CD4-positive, alpha-beta memory T cell (primary cell): ENCODE measurements at regions of chr10 and their contacts with region 1.

Region 1: DNA sequence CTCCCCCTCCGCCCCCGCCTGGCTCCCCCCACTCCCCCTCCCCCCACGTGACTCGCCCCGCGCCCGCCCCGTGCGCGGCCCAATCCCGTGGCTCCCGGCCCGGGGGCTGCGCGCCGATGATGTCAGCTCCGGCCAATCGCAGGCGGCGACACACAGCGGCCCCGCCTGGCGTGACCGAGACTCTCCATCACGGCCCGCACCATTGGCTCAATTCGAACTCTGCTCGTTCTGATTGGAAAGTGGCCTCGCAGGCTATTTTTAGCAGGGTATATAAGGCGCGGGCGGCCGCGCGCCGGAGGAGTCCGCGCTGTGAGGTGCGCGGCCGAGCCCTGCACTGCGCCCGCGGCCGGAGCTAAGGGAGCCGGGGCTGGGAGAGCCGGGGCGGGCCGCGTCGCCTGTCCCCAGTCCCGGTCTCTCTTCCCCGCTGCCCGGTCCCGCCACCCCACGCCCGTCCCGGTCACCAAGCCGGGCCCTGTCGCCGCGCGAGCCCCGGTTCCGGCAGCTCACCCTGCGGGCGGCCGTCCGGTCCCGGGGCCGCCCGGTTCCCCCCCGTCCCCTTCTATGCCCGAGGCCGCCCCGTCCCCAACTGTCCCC is 345 bp upstream of the KLF6 start:
- DNase-seq: peak; percentile 99 to 100 (median 100)
- H3K4me3 ChIP-seq: peak overlapping the region; percentile 75 to 95
- H3K4me3 Mint-ChIP-seq: peak overlapping the region; percentile 90 to 99 (median 96)
- H3K27ac ChIP-seq: peak overlapping the region; percentile 97
- H3K27ac Mint-ChIP-seq: peak overlapping the region; percentile 98 to 100 (median 98)
- H3K4me1 ChIP-seq: peaks cover 23% of the 10 kb centered on the region
- H3K4me1 Mint-ChIP-seq: peaks cover 8 to 55% (median 24%) of the 10 kb centered on the region in 4 donors
- H3K27me3 ChIP-seq: no peaks in the 10 kb centered on the region
- H3K27me3 Mint-ChIP-seq: peaks cover 0 to 2% of the 10 kb centered on the region in 2 donors

Region 2: DNA sequence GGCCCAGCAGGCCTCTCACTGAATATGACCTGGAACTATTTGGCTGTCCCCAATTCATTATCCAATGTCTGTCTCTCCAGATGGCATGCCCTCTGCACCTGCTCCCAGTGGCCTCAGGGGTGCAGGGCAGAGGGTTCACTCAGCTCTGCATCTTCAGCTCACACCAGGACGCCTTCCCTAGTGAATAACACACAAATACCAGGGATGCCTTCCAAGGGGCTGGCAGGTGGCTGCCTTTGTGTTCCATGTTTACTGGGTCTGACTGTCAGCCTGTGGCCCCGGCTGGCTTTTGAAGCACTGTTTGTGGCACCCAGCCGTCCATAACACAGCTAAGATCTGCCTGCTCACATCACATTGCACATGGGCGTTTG is 1308.2 kb before region 1 on chr10:
- CTCF ChIA-PET with region 1: no interaction called
- POLR2A ChIA-PET with region 1: no interaction called
- intact Hi-C with region 1: no loop called
- DNase-seq: no peak
- H3K4me3 ChIP-seq: no peak overlapping the region
- H3K4me3 Mint-ChIP-seq: no peak overlapping the region
- H3K27ac ChIP-seq: no peak overlapping the region
- H3K27ac Mint-ChIP-seq: no peak overlapping the region
- H3K4me1 ChIP-seq: no peaks in the 10 kb centered on the region
- H3K4me1 Mint-ChIP-seq: peaks cover 0 to 1% (median 0%) of the 10 kb centered on the region in 4 donors
- H3K27me3 ChIP-seq: no peaks in the 10 kb centered on the region
- H3K27me3 Mint-ChIP-seq: peaks cover 0 to 1% of the 10 kb centered on the region in 2 donors

Region 3: DNA sequence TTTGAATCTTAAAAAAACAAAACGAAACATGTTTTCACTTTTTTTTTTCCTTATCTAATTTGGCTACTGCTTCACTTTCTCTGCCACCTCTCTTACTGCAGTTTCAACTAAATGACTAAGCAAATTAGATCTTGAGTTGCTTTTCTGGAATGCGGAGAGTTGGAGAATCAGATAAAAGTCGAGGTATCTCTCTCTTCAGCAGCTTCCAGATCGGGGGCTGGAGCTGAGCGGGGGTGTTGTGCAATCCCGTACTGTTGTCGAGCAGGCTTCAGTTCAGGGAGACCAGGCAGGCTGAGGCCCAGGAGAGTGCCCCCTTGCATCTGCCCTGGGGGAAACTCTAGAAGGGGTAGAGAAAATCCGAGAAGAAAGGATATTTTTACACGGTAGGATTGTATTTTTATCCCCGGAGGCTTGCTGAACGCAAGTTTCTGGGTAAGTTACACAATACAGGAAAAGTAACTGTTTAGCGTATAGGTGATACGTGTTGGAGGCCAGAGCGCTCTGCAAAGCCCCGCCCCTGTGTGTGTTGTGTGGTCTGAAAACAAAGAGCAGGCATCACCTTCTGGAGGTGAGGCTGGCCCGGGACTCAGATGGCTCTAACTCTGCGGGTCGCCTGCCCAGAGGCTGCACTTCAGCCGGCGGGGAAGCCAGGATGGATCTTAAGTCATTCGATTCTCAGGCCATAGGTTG is 116.9 kb before region 1 on chr10:
- CTCF ChIA-PET with region 1: interaction called, 4 read pairs
- POLR2A ChIA-PET with region 1: interaction called, 96 read pairs
- intact Hi-C with region 1: loop called (anchors 2 kb)
- DNase-seq: peak; percentile 83 to 89 (median 85)
- H3K4me3 ChIP-seq: peak overlapping the region; percentile 65 to 92
- H3K4me3 Mint-ChIP-seq: peak overlapping the region; percentile 86 to 96 (median 92)
- H3K27ac ChIP-seq: peak overlapping the region; percentile 67
- H3K27ac Mint-ChIP-seq: peak overlapping the region; percentile 96 to 98 (median 97)
- H3K4me1 ChIP-seq: peaks cover 44% of the 10 kb centered on the region
- H3K4me1 Mint-ChIP-seq: peaks cover 32 to 58% (median 43%) of the 10 kb centered on the region in 4 donors
- H3K27me3 ChIP-seq: no peaks in the 10 kb centered on the region
- H3K27me3 Mint-ChIP-seq: no peaks in the 10 kb centered on the region

Region 4: DNA sequence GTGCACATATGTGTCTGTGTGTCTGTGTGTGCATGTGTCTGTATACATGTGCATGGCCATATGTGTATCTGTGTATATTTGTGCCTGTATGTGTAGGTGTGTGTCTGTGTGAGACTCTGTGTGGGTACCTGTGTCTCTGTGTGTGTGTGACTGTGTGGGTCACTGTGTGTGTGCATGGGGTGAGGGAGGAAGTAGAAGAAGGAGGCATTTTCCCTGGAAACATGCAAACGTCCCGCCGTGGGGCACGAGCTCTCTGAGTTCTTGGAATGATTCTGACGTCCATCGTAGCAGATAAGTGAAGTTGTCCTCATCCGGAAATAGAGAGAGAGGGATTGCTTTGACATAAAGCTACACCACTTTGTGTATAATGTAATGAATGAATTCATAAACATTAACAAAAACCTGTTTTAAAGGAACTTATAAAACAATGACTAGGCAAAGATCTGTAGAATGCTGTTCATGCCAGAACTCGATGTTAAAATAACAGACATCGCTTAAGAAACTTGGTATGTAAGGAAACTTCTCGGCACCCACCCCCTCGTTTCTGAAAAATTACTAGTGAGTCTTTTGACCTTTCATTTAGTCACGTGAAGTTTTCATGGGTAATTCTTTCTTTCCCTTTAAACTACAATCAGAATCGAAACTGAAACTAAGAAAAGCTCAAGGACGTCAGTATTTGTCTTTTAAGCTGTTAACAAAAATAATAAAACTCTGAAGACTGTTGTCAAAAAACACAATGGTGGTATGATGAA is 43.2 kb after region 1 on chr10:
- CTCF ChIA-PET with region 1: interaction called, 13 read pairs
- POLR2A ChIA-PET with region 1: interaction called, 308 read pairs
- intact Hi-C with region 1: loop called (anchors 1 kb)
- DNase-seq: peak; percentile 53 to 70 (median 62)
- H3K4me3 ChIP-seq: peak overlapping the region; percentile 32 to 55
- H3K4me3 Mint-ChIP-seq: peak overlapping the region; percentile 85 to 91 (median 88)
- H3K27ac ChIP-seq: peak overlapping the region; percentile 78
- H3K27ac Mint-ChIP-seq: peak overlapping the region; percentile 84 to 98 (median 95)
- H3K4me1 ChIP-seq: peaks cover 21% of the 10 kb centered on the region
- H3K4me1 Mint-ChIP-seq: peaks cover 21 to 43% (median 33%) of the 10 kb centered on the region in 4 donors
- H3K27me3 ChIP-seq: no peaks in the 10 kb centered on the region
- H3K27me3 Mint-ChIP-seq: no peaks in the 10 kb centered on the region

Region 5: DNA sequence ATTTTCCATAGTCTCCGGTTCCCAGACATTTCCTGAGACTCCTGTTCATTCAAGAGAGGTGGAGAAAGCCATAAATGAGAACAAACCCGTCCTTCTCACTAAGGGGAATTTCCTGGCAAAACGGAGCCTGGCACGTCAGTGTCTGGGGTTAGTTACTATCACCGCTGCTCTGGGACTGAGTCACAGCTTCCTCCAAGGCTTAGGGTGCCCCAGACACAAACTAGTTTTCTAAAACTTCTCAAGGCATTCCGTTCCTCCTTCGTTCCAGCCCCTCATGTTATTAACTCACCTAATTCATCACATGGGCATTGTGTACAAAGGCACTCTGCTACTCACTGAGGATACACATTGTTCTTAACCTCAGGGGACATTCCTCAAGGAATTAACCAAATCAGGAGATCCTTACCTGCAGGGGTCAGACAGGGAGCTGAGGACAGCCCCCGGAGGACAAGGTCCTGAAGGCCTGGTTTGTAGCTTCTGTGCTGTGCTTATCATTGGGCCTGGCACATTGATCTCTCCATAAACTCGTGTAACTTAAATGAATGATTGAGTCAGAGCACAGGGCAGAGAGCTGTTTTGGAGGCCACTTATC is 102.6 kb after region 1 on chr10:
- CTCF ChIA-PET with region 1: interaction called, 6 read pairs
- POLR2A ChIA-PET with region 1: interaction called, 289 read pairs
- intact Hi-C with region 1: loop called (anchors 2 kb)
- DNase-seq: peak; percentile 70 to 94 (median 74)
- H3K4me3 ChIP-seq: no peak overlapping the region
- H3K4me3 Mint-ChIP-seq: peak overlapping the region; percentile 62 to 82 (median 70)
- H3K27ac ChIP-seq: peak overlapping the region; percentile 77
- H3K27ac Mint-ChIP-seq: peak overlapping the region; percentile 91 to 99 (median 98)
- H3K4me1 ChIP-seq: peaks cover 53% of the 10 kb centered on the region
- H3K4me1 Mint-ChIP-seq: peaks cover 23 to 68% (median 49%) of the 10 kb centered on the region in 4 donors
- H3K27me3 ChIP-seq: no peaks in the 10 kb centered on the region
- H3K27me3 Mint-ChIP-seq: no peaks in the 10 kb centered on the region

Region 6: DNA sequence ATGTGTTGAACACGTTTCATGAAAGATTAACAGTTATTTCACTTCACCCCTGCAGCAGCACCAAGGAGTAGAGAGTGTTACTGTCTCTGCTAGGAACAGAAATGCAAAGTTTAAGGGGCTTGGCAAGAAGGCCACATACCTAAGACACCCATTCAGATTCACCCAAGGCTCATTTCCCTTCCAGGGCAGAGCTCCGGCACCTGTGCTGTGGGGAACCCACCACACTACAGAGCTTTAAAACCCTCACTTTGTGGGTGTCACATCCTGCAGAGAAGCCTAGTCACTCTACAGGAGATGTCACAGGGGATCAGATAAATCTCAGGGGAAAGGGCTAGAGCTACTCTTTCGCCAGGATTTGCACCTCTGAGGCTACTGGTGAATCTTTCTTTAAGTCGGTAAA is 175.7 kb after region 1 on chr10:
- CTCF ChIA-PET with region 1: no interaction called
- POLR2A ChIA-PET with region 1: interaction called, 79 read pairs
- intact Hi-C with region 1: no loop called
- DNase-seq: peak; percentile 57 to 79 (median 71)
- H3K4me3 ChIP-seq: no peak overlapping the region
- H3K4me3 Mint-ChIP-seq: peak overlapping the region; percentile 12 to 82 (median 58)
- H3K27ac ChIP-seq: peak overlapping the region; percentile 19
- H3K27ac Mint-ChIP-seq: peak overlapping the region; percentile 81 to 90 (median 88)
- H3K4me1 ChIP-seq: peaks cover 26% of the 10 kb centered on the region
- H3K4me1 Mint-ChIP-seq: peaks cover 26 to 51% (median 28%) of the 10 kb centered on the region in 4 donors
- H3K27me3 ChIP-seq: no peaks in the 10 kb centered on the region
- H3K27me3 Mint-ChIP-seq: no peaks in the 10 kb centered on the region

Region 7: GRCh38 chr10:4073912-4074311 is 288.6 kb after region 1 on chr10:
- CTCF ChIA-PET with region 1: no interaction called
- POLR2A ChIA-PET with region 1: interaction called, 50 read pairs
- intact Hi-C with region 1: no loop called
- DNase-seq: no peak
- H3K4me3 ChIP-seq: no peak overlapping the region
- H3K4me3 Mint-ChIP-seq: peak overlapping the region in 6 of 8 donors; percentile 20 to 91 (median 86)
- H3K27ac ChIP-seq: no peak overlapping the region
- H3K27ac Mint-ChIP-seq: peak overlapping the region; percentile 87 to 97 (median 93)
- H3K4me1 ChIP-seq: peaks cover 62% of the 10 kb centered on the region
- H3K4me1 Mint-ChIP-seq: peaks cover 33 to 54% (median 43%) of the 10 kb centered on the region in 4 donors
- H3K27me3 ChIP-seq: no peaks in the 10 kb centered on the region
- H3K27me3 Mint-ChIP-seq: peaks cover 0 to 2% of the 10 kb centered on the region in 2 donors